ENCODE measurements at regions of chr10 and their contacts with region 1.

Region 1: GRCh38 chr10:123008439-123009205 is at the starts of genes ACADSB and IKZF5:
- DNase-seq: peak; percentile 95 to 98
- ATAC-seq: peak; percentile 95 to 98 (median 98)
- H3K4me3 ChIP-seq: peak within 1 kb of the TSS; percentile 100
- H3K27ac ChIP-seq: peak within 1 kb of the TSS; percentile 98
- H3K4me1 ChIP-seq: peaks cover 44% of the 10 kb centered on the region
- H3K27me3 ChIP-seq: no peaks in the 10 kb centered on the region
- CTCF ChIP-seq: no peak
- total RNA-seq, gene ACADSB: 37.4 to 50.1 (median 43.5) TPM
- total RNA-seq, gene IKZF5: 10.5 to 18.6 (median 11.9) TPM

Region 2: DNA sequence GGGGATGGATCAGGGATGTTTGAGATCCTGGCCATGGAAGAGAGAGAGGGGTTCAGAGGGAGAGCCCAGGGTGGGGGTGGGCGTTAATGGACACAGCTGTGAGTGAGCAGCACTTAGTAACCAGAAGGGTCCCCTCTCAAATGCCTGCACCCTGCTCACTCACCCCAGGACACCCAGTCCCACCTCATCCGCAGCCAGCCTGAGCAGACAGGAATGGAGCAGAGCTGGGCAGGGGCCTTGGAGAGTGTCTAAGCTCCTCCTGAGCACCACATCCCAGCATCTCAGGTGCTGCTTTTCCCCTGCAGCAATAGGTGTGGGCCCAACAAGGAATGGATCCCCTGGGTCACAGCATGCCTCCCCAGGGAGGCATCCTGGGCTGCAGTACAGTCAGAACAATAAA is 92.9 kb before region 1 on chr10:
- intact Hi-C with region 1: no loop called
- DNase-seq: no peak
- ATAC-seq: no peak
- H3K4me3 ChIP-seq: no peak overlapping the region
- H3K27ac ChIP-seq: no peak overlapping the region
- H3K4me1 ChIP-seq: no peaks in the 10 kb centered on the region
- H3K27me3 ChIP-seq: no peaks in the 10 kb centered on the region
- CTCF ChIP-seq: no peak

Region 3: DNA sequence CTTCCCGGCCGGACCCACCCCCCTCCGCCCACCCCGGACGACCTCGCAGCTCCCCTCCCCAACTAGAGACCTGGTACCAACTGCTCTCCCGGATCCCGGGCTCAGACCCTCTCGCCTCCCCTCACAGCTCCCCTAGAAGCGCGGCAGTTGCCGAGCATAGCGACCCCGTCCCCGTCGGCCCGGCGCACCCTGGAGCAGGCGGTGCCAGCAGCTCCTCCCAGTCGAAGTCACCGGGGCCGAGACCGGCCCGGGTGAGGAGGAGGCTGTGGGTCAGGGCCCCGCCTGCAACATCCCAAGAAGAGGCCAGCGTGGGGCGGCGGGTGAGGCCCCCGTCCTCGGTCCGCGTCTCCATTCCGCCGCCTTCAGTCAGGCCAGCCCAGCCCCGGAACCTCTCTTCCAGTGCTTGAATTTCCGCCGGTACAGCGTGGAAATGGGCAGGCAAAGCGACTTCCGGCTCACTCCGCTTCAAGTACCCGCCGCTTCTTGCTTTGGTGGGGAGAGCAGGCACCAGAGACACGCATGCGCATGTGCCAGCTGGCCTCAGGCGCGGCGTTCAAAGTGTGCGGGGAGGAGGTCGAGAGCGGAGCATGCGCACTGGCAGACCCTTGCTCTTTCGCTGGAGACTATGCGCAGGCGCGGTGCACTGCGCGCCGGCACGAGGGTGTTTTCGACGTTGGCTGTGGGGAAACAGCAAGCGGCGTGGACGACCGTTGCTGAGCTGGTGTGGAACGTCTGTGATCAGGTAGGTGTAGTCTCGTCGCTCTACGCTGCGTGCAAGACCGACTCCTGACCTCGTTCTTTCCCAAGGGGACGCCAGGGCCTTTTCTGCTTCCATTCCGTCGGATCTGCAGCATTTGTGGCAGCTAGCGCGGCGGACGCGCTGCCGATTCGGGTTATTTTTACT is 54.5 kb before region 1 on chr10 and contains the start of gene C10orf88:
- intact Hi-C with region 1: loop called in 1 of 2 experiments (anchors 2 kb)
- DNase-seq: peak; percentile 98 to 99
- ATAC-seq: peak; percentile 98 to 100 (median 100)
- H3K4me3 ChIP-seq: peak within 1 kb of the TSS; percentile 87
- H3K27ac ChIP-seq: peak within 1 kb of the TSS; percentile 84
- H3K4me1 ChIP-seq: peaks cover 2% of the 10 kb centered on the region
- H3K27me3 ChIP-seq: no peaks in the 10 kb centered on the region
- CTCF ChIP-seq: no peak
- total RNA-seq, gene C10orf88: 4.3 to 8.3 (median 6.8) TPM

Region 4: DNA sequence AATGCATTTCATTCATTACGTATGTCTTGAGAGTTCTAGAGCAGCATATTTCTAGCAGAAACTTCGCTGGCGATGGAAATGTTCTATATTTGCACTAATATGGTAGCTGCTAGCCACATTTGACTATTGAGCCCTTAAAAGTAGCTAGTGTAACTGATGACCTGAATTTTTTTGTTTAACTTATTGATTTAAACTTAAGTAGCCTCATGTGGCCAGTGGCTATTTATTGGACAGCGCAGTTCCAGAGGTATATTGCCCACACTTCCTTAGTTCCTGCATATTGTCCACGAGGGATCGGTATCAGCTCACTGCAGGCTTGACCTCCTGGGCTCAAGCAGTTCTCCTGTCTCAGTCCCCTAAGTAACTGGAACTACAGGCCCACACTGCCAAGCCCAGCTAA is 24.7 kb before region 1 on chr10:
- intact Hi-C with region 1: loop called in 1 of 2 experiments (anchors 2 kb)
- DNase-seq: no peak
- ATAC-seq: no peak
- H3K4me3 ChIP-seq: no peak overlapping the region
- H3K27ac ChIP-seq: no peak overlapping the region
- H3K4me1 ChIP-seq: peaks cover 9% of the 10 kb centered on the region
- H3K27me3 ChIP-seq: no peaks in the 10 kb centered on the region
- CTCF ChIP-seq: no peak

Region 5: GRCh38 chr10:123117644-123118417 is 109.2 kb after region 1 on chr10:
- intact Hi-C with region 1: no loop called
- DNase-seq: no peak
- ATAC-seq: no peak
- H3K4me3 ChIP-seq: no peak overlapping the region
- H3K27ac ChIP-seq: no peak overlapping the region
- H3K4me1 ChIP-seq: no peaks in the 10 kb centered on the region
- H3K27me3 ChIP-seq: peaks cover under 1 to 52% (median 10%) of the 10 kb centered on the region in 3 donors
- CTCF ChIP-seq: no peak

Region 6: GRCh38 chr10:123309731-123310130 is 301.1 kb after region 1 on chr10:
- intact Hi-C with region 1: no loop called
- DNase-seq: no peak
- ATAC-seq: no peak
- H3K4me3 ChIP-seq: no peak overlapping the region
- H3K27ac ChIP-seq: no peak overlapping the region
- H3K4me1 ChIP-seq: no peaks in the 10 kb centered on the region
- H3K27me3 ChIP-seq: no peaks in the 10 kb centered on the region
- CTCF ChIP-seq: no peak

Measured in psoas muscle (tissue), 8 donors.